ENCODE measurements at regions of chr17 and their contacts with region 1.

Region 1: GRCh38 chr17:69523244-69523861 is 108.9 kb downstream of the MAP2K6 start:
- DNase-seq: peak; percentile 13
- ATAC-seq: no peak
- H3K4me3 Mint-ChIP-seq: no peak overlapping the region
- H3K27ac Mint-ChIP-seq: no peak overlapping the region
- H3K4me1 Mint-ChIP-seq: no peaks in the 10 kb centered on the region
- H3K27me3 Mint-ChIP-seq: no peaks in the 10 kb centered on the region

Region 2: GRCh38 chr17:68771867-68772515 is 751.4 kb before region 1 on chr17:
- CTCF ChIA-PET with region 1: no interaction called
- POLR2A ChIA-PET with region 1: no interaction called
- intact Hi-C with region 1: loop called in 1 of 2 experiments (anchors 10 kb)
- DNase-seq: no peak
- ATAC-seq: peak; percentile 36
- H3K4me3 Mint-ChIP-seq: no peak overlapping the region
- H3K27ac Mint-ChIP-seq: no peak overlapping the region
- H3K4me1 Mint-ChIP-seq: no peaks in the 10 kb centered on the region
- H3K27me3 Mint-ChIP-seq: no peaks in the 10 kb centered on the region

Region 3: GRCh38 chr17:69223809-69224208 is 299.5 kb before region 1 on chr17:
- CTCF ChIA-PET with region 1: no interaction called
- POLR2A ChIA-PET with region 1: no interaction called
- intact Hi-C with region 1: no loop called
- DNase-seq: no peak
- ATAC-seq: no peak
- H3K4me3 Mint-ChIP-seq: no peak overlapping the region
- H3K27ac Mint-ChIP-seq: no peak overlapping the region
- H3K4me1 Mint-ChIP-seq: peaks cover 9% of the 10 kb centered on the region
- H3K27me3 Mint-ChIP-seq: no peaks in the 10 kb centered on the region

Region 4: GRCh38 chr17:69358688-69359596 is 164.4 kb before region 1 on chr17:
- CTCF ChIA-PET with region 1: interaction called, 6 read pairs
- POLR2A ChIA-PET with region 1: no interaction called
- intact Hi-C with region 1: loop called in 1 of 2 experiments (anchors 2 kb)
- DNase-seq: peak; percentile 18
- ATAC-seq: peak; percentile 44
- H3K4me3 Mint-ChIP-seq: no peak overlapping the region
- H3K27ac Mint-ChIP-seq: no peak overlapping the region
- H3K4me1 Mint-ChIP-seq: no peaks in the 10 kb centered on the region
- H3K27me3 Mint-ChIP-seq: peaks cover 7% of the 10 kb centered on the region

Region 5: DNA sequence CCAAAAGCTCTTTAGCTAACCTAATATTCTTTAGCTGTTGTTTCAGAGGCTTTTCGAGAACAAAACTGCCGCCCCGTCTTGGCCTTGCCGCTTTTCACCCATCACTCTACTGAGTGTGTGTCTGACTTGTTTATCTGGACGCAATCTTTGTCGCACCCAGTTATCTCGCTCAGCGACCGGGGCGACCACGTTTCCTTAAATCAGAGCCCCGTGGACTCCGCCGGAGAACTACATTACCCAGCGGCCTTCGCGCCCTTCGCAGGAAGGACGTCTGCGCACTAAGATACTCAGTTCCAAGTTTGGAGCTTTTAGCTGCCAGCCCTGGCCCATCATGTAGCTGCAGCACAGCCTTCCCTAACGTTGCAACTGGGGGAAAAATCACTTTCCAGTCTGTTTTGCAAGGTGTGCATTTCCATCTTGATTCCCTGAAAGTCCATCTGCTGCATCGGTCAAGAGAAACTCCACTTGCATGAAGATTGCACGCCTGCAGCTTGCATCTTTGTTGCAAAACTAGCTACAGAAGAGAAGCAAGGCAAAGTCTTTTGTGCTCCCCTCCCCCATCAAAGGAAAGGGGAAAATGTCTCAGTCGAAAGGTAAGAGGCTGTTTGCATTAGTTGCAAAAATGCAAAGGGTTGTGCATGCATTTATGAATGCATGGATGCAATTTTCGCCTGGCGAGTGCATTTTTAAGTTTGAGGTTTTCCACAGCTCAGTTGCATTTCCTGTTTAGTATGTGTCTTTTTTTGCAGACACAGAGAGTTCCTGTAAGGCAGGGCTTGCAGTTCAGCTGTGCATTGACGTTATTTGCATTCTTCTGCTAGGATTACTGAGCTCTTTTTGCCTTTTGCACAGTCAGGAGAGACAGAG is 108.7 kb before region 1 on chr17 and contains the start of gene MAP2K6:
- CTCF ChIA-PET with region 1: interaction called, 19 read pairs
- POLR2A ChIA-PET with region 1: no interaction called
- intact Hi-C with region 1: loop called (anchors 5 kb)
- DNase-seq: peak; percentile 91
- ATAC-seq: peak; percentile 99
- H3K4me3 Mint-ChIP-seq: no peak within 1 kb of the TSS
- H3K27ac Mint-ChIP-seq: no peak within 1 kb of the TSS
- H3K4me1 Mint-ChIP-seq: peaks cover 10% of the 10 kb centered on the region
- H3K27me3 Mint-ChIP-seq: no peaks in the 10 kb centered on the region
- total RNA-seq, gene MAP2K6: 2.7 to 3.4 TPM

Region 6: DNA sequence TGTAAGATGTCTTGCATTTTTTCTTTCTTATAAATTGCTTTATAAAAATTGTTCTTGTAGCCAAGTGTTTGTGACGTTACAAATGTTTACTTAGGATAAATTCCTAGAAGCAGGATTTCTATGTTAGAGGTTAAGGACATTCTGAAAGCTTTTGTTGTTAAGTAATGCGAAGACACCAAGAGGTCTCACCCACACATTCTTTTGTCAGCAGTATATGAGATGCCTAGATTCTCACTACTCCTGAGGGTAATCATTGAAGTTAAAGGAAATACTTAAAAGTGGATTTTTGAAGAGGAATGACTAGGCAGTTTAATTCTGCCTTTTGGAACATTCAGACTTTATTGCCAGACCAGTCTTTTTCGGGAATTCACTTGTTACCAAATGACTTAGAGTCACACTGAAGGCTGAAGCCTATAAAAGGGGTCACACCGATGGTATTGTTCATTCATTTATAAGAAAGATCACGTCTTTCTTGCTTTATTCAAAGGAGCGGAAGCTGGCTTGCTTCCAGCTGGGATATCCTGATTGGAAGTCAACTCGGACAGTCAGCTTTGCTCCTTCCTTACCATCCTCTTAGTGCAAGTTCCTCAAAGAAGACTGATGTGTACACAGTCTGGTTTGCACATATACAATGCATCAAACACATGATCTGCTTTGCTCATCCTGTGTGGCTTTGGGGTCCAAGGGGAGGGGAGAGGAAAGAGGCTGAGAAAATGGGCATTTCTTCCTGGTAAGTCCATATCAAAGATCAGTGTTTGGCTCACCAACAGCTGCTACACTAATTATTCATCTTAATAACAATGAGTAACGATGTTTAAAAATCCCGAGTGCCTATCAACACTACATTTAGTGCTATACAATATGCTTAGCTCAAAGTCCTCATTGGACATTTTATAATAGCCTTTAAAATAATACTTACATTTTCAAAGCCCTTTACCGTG is 51.2 kb after region 1 on chr17:
- CTCF ChIA-PET with region 1: interaction called, 5 read pairs
- POLR2A ChIA-PET with region 1: no interaction called
- intact Hi-C with region 1: loop called in 1 of 2 experiments (anchors 2 kb)
- DNase-seq: no peak
- ATAC-seq: no peak
- H3K4me3 Mint-ChIP-seq: no peak overlapping the region
- H3K27ac Mint-ChIP-seq: no peak overlapping the region
- H3K4me1 Mint-ChIP-seq: no peaks in the 10 kb centered on the region
- H3K27me3 Mint-ChIP-seq: peaks cover 16% of the 10 kb centered on the region

Region 7: GRCh38 chr17:70622368-70623260 is 1099.3 kb after region 1 on chr17:
- CTCF ChIA-PET with region 1: no interaction called
- POLR2A ChIA-PET with region 1: no interaction called
- intact Hi-C with region 1: loop called in 1 of 2 experiments (anchors 5 kb)
- DNase-seq: peak; percentile 56
- ATAC-seq: no peak
- H3K4me3 Mint-ChIP-seq: no peak overlapping the region
- H3K27ac Mint-ChIP-seq: no peak overlapping the region
- H3K4me1 Mint-ChIP-seq: peaks cover 4% of the 10 kb centered on the region
- H3K27me3 Mint-ChIP-seq: no peaks in the 10 kb centered on the region